ENCODE measurements at regions of chr22 and their contacts with region 1.

Region 1: GRCh38 chr22:37199103-37199759 is 11.2 kb upstream of the C1QTNF6 start:
- DNase-seq: peak; percentile 97 to 100 (median 99)
- ATAC-seq: peak; percentile 95
- H3K4me3 ChIP-seq: peak overlapping the region; percentile 87
- H3K4me3 Mint-ChIP-seq: peak overlapping the region; percentile 93
- H3K27ac ChIP-seq: peak overlapping the region; percentile 90 to 94
- H3K27ac Mint-ChIP-seq: peak overlapping the region; percentile 100
- H3K4me1 ChIP-seq: peaks cover 57% of the 10 kb centered on the region
- H3K4me1 Mint-ChIP-seq: peaks cover 48% of the 10 kb centered on the region
- H3K27me3 ChIP-seq: no peaks in the 10 kb centered on the region
- H3K27me3 Mint-ChIP-seq: no peaks in the 10 kb centered on the region
- CTCF ChIP-seq: peak; percentile 90

Region 2: DNA sequence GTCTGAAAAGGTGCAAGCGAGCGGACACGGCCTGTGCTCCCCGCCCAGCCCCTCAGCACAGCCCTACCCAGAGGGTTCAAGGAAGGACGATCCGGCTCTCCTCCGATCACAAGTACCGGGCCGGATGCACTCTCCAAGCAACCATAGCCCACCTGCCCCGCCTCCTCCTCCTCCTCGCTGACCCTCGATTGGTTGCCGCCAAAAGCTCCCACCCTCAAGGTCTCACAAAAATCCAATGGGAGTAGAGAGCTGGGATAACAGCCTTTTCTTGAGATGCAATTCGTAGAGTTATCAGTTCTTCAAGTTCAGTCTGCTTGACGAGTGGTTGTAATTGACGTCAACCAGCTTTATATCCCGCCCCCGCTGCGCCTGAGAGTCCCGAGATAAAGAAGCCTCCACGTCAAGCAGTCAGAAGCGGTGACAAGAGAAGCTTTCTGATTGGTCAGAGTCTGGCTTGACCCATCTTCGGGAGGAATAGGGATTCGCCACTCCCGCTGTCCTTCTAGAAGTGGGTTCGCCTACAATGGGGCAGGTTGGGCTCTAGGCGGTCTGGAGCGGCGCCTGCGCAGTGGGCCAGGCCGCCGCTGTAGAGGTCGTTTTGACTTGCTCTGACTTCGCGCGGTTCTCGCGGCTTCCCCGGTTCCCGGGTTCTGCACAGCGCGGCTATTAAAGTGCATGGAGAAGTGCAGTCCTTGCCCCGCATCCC is 423.1 kb before region 1 on chr22 and contains the start of gene IFT27:
- CTCF ChIA-PET with region 1: no interaction called
- POLR2A ChIA-PET with region 1: interaction called, 4 read pairs
- intact Hi-C with region 1: loop called (anchors 5 to 10 kb)
- DNase-seq: peak; percentile 88 to 100 (median 94)
- ATAC-seq: peak; percentile 86
- H3K4me3 ChIP-seq: peak within 1 kb of the TSS; percentile 80
- H3K4me3 Mint-ChIP-seq: peak within 1 kb of the TSS; percentile 92
- H3K27ac ChIP-seq: peak within 1 kb of the TSS; percentile 84 to 90
- H3K27ac Mint-ChIP-seq: peak within 1 kb of the TSS; percentile 93
- H3K4me1 ChIP-seq: peaks cover 21% of the 10 kb centered on the region
- H3K4me1 Mint-ChIP-seq: peaks cover 29% of the 10 kb centered on the region
- H3K27me3 ChIP-seq: no peaks in the 10 kb centered on the region
- H3K27me3 Mint-ChIP-seq: no peaks in the 10 kb centered on the region
- CTCF ChIP-seq: no peak
- total RNA-seq, gene IFT27: 10.2 to 10.9 TPM

Region 3: GRCh38 chr22:36977947-36978660 is 221.1 kb before region 1 on chr22:
- CTCF ChIA-PET with region 1: interaction called, 3 read pairs
- POLR2A ChIA-PET with region 1: no interaction called
- intact Hi-C with region 1: loop called in 1 of 2 experiments (anchors 2 kb)
- DNase-seq: peak; percentile 83 to 95 (median 88)
- ATAC-seq: peak; percentile 88
- H3K4me3 ChIP-seq: peak overlapping the region; percentile 77
- H3K4me3 Mint-ChIP-seq: peak overlapping the region; percentile 97
- H3K27ac ChIP-seq: peak overlapping the region; percentile 16 to 62
- H3K27ac Mint-ChIP-seq: peak overlapping the region; percentile 92
- H3K4me1 ChIP-seq: peaks cover 15% of the 10 kb centered on the region
- H3K4me1 Mint-ChIP-seq: peaks cover 8% of the 10 kb centered on the region
- H3K27me3 ChIP-seq: peaks cover 0 to 5% of the 10 kb centered on the region in 2 experiments
- H3K27me3 Mint-ChIP-seq: peaks cover 5% of the 10 kb centered on the region
- CTCF ChIP-seq: peak; percentile 88

Region 4: DNA sequence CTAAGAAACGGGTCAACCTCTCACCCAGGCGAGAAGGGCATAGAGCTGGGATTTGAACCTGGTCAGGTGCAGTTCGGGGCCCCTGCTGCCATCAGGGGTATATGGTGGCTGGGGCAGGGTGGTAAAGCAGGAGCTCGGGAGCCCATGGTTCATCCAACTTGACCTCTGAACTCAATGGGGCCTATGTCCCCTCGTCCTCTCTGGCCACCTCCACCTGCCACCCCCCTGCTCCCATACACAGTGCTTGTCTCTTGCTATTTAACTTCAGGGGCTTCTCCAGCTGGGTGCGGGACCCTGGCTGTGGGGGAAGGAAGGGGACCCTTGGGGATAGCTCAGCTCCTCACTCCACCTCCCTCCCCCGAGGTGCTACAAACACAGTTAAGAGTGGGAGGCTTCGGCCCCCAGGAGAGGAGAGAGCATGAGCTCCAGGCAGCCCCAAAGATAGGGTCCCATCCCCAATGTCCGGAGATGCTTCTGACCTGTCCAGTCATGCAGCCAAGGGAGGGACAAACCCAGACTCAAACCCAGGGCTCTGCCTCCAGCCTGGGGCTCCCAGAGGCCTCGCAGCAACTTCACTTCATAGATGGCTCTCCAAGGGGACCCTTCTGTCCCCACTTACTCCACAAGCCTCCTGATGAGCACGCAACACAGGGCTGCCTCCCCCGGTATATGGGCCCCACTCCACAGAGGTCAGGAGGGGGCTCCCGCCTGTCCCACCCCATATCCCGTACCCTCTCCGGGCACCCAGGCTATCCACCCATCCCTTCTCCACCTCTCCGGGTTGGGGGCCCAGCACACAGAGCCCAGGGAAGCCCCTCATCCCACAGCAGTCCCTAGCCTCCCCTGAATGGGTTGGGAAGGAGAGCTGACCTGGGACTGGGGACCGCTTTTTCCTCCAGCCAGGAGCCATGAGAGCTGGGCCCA is 50.2 kb before region 1 on chr22:
- CTCF ChIA-PET with region 1: interaction called, 13 read pairs
- POLR2A ChIA-PET with region 1: interaction called, 9 read pairs
- intact Hi-C with region 1: no loop called
- DNase-seq: peak in 1 of 14 experiments; percentile 35
- ATAC-seq: no peak
- H3K4me3 ChIP-seq: peak overlapping the region; percentile 78
- H3K4me3 Mint-ChIP-seq: peak overlapping the region; percentile 93
- H3K27ac ChIP-seq: peak overlapping the region; percentile 61 to 82
- H3K27ac Mint-ChIP-seq: peak overlapping the region; percentile 97
- H3K4me1 ChIP-seq: peaks cover 63% of the 10 kb centered on the region
- H3K4me1 Mint-ChIP-seq: peaks cover 76% of the 10 kb centered on the region
- H3K27me3 ChIP-seq: no peaks in the 10 kb centered on the region
- H3K27me3 Mint-ChIP-seq: no peaks in the 10 kb centered on the region
- CTCF ChIP-seq: no peak

Region 5: GRCh38 chr22:37218771-37219411 is 19.7 kb after region 1 on chr22:
- CTCF ChIA-PET with region 1: interaction called, 42 read pairs
- POLR2A ChIA-PET with region 1: interaction called, 57 read pairs
- intact Hi-C with region 1: loop called (anchors 1 to 2 kb)
- DNase-seq: peak; percentile 54 to 93 (median 74)
- ATAC-seq: peak; percentile 80
- H3K4me3 ChIP-seq: peak overlapping the region; percentile 49
- H3K4me3 Mint-ChIP-seq: peak overlapping the region; percentile 64
- H3K27ac ChIP-seq: peak overlapping the region; percentile 71 to 82
- H3K27ac Mint-ChIP-seq: peak overlapping the region; percentile 84
- H3K4me1 ChIP-seq: peaks cover 76% of the 10 kb centered on the region
- H3K4me1 Mint-ChIP-seq: peaks cover 93% of the 10 kb centered on the region
- H3K27me3 ChIP-seq: no peaks in the 10 kb centered on the region
- H3K27me3 Mint-ChIP-seq: no peaks in the 10 kb centered on the region
- CTCF ChIP-seq: no peak

Region 6: GRCh38 chr22:37244114-37244921 is 45.1 kb after region 1 on chr22 and contains the start of gene RAC2:
- CTCF ChIA-PET with region 1: interaction called, 89 read pairs
- POLR2A ChIA-PET with region 1: interaction called, 64 read pairs
- intact Hi-C with region 1: loop called in 1 of 2 experiments (anchors 2 kb)
- DNase-seq: peak; percentile 72 to 95 (median 88)
- ATAC-seq: peak; percentile 59
- H3K4me3 ChIP-seq: peak within 1 kb of the TSS; percentile 100
- H3K4me3 Mint-ChIP-seq: peak within 1 kb of the TSS; percentile 95
- H3K27ac ChIP-seq: peak within 1 kb of the TSS; percentile 85 to 96
- H3K27ac Mint-ChIP-seq: peak within 1 kb of the TSS; percentile 97
- H3K4me1 ChIP-seq: peaks cover 58% of the 10 kb centered on the region
- H3K4me1 Mint-ChIP-seq: peaks cover 58% of the 10 kb centered on the region
- H3K27me3 ChIP-seq: no peaks in the 10 kb centered on the region
- H3K27me3 Mint-ChIP-seq: no peaks in the 10 kb centered on the region
- CTCF ChIP-seq: no peak
- total RNA-seq, gene RAC2: 174 to 180 TPM